Ovary (tissue), 10 donors: ENCODE measurements at regions of chr18 and their contacts with region 1.

Region 1: GRCh38 chr18:76546088-76546435 is 51.0 kb upstream of the ZNF516 start:
- DNase-seq: no peak
- H3K4me3 ChIP-seq: no peak overlapping the region
- H3K27ac ChIP-seq: peak overlapping the region in 1 of 2 donors; percentile 36
- H3K4me1 ChIP-seq: peaks cover 8% of the 10 kb centered on the region
- H3K27me3 ChIP-seq: no peaks in the 10 kb centered on the region
- CTCF ChIP-seq: no peak
- EP300 ChIP-seq: no peak
- POLR2A ChIP-seq: no peak

Region 2: DNA sequence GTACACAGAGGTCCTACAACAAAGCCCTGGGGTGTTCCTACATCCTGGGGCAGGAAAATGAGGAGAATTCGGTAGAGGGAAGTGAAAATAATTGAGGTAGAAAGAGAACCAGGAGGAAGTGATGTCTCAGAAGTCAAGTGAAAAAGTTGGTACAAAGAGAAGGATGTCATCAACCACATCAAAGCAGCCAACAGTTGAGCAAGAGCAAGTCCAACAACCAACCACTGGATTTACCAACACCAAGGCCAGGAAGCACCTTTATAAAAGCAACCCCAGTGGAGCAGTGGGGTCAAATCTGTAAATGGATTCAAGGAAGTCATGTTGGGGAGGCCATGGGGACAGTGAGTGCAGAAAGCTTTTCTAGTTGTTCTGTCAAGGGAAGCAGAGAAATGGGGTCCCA is 411.4 kb before region 1 on chr18:
- intact Hi-C with region 1: loop called in 1 of 4 experiments (anchors 5 kb)
- DNase-seq: no peak
- H3K4me3 ChIP-seq: no peak overlapping the region
- H3K27ac ChIP-seq: no peak overlapping the region
- H3K4me1 ChIP-seq: no peaks in the 10 kb centered on the region
- H3K27me3 ChIP-seq: no peaks in the 10 kb centered on the region
- CTCF ChIP-seq: no peak
- EP300 ChIP-seq: no peak
- POLR2A ChIP-seq: no peak

Region 3: GRCh38 chr18:76232796-76233195 is 313.3 kb before region 1 on chr18:
- intact Hi-C with region 1: no loop called
- DNase-seq: no peak
- H3K4me3 ChIP-seq: no peak overlapping the region
- H3K27ac ChIP-seq: no peak overlapping the region
- H3K4me1 ChIP-seq: peaks cover 5% of the 10 kb centered on the region
- H3K27me3 ChIP-seq: no peaks in the 10 kb centered on the region
- CTCF ChIP-seq: no peak
- EP300 ChIP-seq: no peak
- POLR2A ChIP-seq: no peak

Region 4: GRCh38 chr18:76492669-76493212 is 53.3 kb before region 1 on chr18:
- intact Hi-C with region 1: no loop called
- DNase-seq: peak; percentile 100
- H3K4me3 ChIP-seq: peak overlapping the region; percentile 70
- H3K27ac ChIP-seq: peak overlapping the region; percentile 80 to 89
- H3K4me1 ChIP-seq: peaks cover 2% of the 10 kb centered on the region
- H3K27me3 ChIP-seq: no peaks in the 10 kb centered on the region
- CTCF ChIP-seq: peak in 1 of 3 donors; percentile 10
- EP300 ChIP-seq: no peak
- POLR2A ChIP-seq: peak; percentile 62

Region 5: DNA sequence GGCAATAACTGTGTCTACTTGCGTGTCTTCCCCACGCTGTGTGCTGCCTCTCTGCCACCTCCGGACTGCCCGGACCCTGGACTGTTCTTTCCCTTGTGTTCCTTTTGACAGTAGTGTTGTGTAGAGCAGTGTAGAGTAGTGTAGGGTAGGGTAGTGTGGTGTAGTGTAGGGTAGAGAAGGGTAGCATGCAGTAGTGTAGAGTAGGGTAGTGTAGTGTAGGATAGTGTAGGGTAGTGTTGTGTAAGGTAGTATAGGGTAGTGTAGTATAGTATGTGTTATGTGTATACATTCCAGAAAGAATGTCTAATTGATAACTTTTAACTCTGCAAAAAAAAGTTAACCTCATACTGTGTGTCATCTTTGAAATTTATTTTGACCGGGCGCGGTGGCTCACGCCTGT is 226.6 kb after region 1 on chr18:
- intact Hi-C with region 1: no loop called
- DNase-seq: no peak
- H3K4me3 ChIP-seq: no peak overlapping the region
- H3K27ac ChIP-seq: no peak overlapping the region
- H3K4me1 ChIP-seq: no peaks in the 10 kb centered on the region
- H3K27me3 ChIP-seq: no peaks in the 10 kb centered on the region
- CTCF ChIP-seq: no peak
- EP300 ChIP-seq: no peak
- POLR2A ChIP-seq: no peak